GM10248 (cell line): ENCODE measurements at regions of chr3 and their contacts with region 1.

Region 1: DNA sequence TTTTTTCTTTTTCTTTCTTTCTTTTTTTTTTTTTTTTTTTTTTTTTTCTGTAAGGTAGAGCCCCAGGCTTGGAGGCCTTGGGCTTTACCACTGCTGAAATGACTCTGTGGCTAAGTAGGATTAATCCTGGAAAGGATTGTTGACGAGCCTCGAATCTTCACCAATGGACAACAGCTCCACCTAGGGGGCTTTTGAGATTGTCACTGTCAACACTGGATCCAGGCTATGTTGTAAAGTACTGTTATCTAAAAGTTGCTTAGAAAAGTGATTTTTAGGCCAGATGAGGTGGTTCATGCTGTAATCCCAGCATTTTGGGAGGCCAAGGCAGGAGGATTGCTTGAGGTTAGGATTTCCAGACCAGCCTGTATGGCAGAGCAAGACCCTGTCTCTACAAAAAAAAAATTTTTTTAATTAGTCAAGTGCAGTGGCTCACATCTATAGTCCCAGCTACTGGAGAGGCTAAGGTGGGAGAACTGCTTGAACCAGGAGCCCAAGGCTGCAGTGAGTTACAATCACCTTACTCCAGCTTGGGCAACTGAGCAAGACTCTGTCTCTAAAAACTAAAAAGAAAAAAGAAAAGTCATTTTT is 41.6 kb downstream of the KLHL18 start:
- DNase-seq: peak; percentile 71
- CTCF ChIP-seq: peak; percentile 63

Region 2: DNA sequence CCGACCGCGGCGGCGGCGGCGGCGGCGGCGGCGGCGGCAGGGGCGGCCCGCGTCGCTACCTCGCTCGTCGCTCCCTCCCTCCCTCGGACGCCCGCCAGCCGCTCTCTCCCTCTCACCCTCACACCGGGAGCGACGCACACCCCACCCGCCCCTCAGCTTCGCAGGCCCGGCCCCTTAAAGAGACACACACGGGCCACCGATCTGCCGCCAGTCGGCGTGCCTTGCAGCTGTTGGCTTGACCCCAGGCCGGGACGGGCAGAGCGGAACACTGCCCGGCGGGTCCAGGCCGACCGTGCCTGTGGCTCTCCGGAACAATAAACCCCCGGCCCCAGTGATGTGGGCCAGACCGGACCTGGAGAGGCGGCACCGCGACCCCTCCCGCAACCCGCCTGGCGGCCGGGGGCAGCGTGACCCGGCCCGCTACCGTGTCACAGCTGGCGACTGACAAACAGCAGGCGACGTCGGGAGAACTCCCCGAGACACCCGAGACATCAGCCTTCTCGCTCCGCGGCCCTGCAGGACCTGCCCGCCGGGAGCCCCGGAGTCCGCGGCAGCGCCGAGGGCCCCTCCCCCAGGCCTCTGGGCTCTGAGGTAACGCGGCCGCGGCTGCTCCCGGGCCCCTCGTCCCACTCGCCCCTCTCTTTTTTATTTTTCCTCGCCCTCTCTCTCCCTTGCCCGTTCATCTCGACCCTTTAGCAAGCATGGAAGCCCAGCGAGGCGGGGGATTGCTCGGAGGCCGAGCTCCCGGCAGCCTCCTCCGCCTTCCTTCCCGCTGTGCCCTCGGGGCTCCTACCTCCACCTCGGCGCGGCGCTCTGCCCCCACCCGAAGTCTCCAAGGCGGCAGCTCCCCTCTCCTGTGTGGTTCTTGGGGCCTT is 160.1 kb before region 1 on chr3 and contains the start of gene SETD2:
- CTCF ChIA-PET with region 1: interaction called, 15 read pairs
- POLR2A ChIA-PET with region 1: no interaction called
- DNase-seq: peak; percentile 93
- CTCF ChIP-seq: peak; percentile 85

Region 3: GRCh38 chr3:47250309-47251060 is 73.9 kb before region 1 on chr3:
- CTCF ChIA-PET with region 1: interaction called, 31 read pairs
- POLR2A ChIA-PET with region 1: no interaction called
- DNase-seq: peak; percentile 53
- CTCF ChIP-seq: peak; percentile 43

Region 4: GRCh38 chr3:47266709-47267489 is 57.5 kb before region 1 on chr3:
- CTCF ChIA-PET with region 1: interaction called, 10 read pairs
- POLR2A ChIA-PET with region 1: no interaction called
- DNase-seq: peak; percentile 60
- CTCF ChIP-seq: no peak

Region 5: GRCh38 chr3:47291158-47291753 is 33.1 kb before region 1 on chr3:
- CTCF ChIA-PET with region 1: interaction called, 14 read pairs
- POLR2A ChIA-PET with region 1: interaction called, 3 read pairs
- DNase-seq: no peak
- CTCF ChIP-seq: no peak

Region 6: DNA sequence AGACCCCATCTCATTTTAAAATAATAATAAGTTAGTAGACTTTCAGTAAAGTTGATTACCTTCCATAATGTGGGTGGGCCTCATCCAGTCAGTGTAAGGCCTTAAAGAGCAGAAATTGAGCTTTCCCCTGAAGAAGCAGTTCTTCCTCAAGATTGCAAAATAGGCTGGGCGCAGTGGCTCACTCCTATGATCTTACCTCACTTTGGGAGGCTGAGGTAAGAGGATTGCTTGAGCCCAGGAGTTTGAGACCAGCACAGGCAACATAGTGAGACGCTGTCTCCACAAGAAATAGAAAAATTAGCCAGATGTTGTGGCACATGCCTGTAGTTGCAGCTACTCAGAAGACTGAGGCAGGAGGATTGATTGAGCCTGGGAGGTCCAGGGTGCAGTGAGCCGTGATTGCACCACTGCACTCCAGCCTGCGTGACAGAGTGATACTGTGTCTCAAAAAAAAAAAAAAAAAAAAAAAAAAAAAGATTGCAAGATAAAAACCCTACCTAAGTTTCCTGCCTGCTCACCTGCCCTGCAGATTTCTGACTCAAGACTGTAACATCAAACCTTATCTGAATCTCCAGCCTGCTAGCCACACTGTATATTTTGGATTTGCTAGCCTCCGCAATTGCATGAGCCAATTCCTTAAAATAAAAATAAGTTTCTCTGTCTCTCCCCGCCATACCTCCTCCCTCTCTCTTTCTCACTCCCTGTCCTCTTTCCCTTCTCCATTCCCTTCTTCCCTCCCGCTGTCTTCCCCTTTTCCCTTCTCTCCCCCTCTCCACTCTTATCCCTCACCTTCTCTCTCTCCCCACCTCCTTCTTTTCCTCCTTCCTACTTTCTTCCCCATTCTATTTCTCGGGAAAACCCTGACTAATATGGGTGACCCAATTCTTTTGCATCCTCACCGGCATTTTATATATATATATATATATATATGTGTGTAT is 24.7 kb before region 1 on chr3:
- CTCF ChIA-PET with region 1: interaction called, 16 read pairs
- POLR2A ChIA-PET with region 1: interaction called, 3 read pairs
- DNase-seq: no peak
- CTCF ChIP-seq: no peak

Region 7: GRCh38 chr3:47342151-47342550 is 17.8 kb after region 1 on chr3:
- CTCF ChIA-PET with region 1: interaction called, 20 read pairs
- POLR2A ChIA-PET with region 1: no interaction called
- DNase-seq: no peak
- CTCF ChIP-seq: no peak

Region 8: DNA sequence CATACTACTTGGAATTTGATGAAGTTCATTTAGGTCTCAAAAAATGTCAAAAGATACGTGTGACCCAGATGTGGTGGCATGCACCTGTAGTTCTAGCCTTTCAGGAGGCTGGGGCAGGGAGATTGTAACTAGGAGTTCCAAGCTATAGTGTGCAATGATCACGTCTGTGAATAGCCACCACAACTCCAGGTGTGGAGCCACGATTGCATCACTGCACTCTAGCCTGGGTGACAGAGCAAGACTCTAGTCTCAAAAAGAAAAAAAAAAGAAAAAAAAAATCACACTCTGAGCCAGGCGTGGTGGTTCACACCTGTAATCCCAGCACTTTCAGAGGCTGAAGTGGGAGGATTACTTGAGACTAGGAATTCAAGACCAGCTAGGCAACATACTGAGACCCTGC is 677.6 kb after region 1 on chr3:
- CTCF ChIA-PET with region 1: no interaction called
- POLR2A ChIA-PET with region 1: no interaction called
- DNase-seq: no peak
- CTCF ChIP-seq: no peak